IMR-90 (cell line): ENCODE measurements at regions of chr6 and their contacts with region 1.

Region 1: DNA sequence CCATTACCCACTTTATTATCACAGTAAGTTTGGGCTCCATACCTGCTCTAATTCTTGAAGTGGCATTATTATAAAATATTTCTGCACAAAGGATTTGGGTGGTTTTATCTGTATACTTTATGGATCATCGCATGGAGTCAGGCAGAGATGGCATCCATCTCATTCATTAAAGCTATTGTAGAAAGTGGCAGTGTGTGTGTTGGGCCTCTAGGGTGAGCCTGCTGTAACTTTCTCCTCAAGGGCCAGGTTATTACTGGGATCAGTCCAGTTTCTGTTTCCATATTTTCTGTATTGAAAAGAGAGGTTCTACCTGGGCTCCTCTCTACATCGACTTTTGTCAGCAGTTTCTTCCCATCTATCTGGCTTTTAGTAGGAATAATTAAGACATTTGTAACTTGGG is 511.1 kb downstream of the MMUT start:
- DNase-seq: no peak
- ATAC-seq: no peak
- H3K4me3 ChIP-seq: no peak overlapping the region
- H3K27ac ChIP-seq: no peak overlapping the region
- H3K4me1 ChIP-seq: no peaks in the 10 kb centered on the region
- H3K27me3 ChIP-seq: no peaks in the 10 kb centered on the region
- CTCF ChIP-seq: no peak
- POLR2A ChIP-seq: no peak
- RAD21 ChIP-seq: no peak

Region 2: DNA sequence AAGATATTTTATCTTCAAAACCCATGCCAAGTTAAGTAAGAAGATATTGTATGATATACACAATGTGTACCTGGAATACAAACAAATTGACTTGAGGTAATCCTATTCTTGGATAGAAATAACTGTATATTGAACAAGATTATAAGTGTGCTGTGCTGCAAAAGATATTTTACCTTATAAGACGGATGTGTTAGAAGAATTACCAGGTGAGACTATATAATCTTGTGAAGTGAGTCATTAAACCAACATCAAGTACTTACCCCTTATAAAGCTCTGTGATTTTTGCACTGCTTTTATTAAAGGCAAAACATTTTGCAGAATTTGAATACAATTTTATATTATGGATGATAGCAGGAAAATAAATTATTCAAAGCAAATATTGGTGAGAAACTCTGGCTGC is 58.9 kb before region 1 on chr6:
- CTCF ChIA-PET with region 1: no interaction called
- POLR2A ChIA-PET with region 1: no interaction called
- dilution Hi-C with region 1: no loop called
- in situ Hi-C with region 1: no loop called
- intact Hi-C with region 1: loop called (anchors 5 kb)
- DNase-seq: no peak
- ATAC-seq: no peak
- H3K4me3 ChIP-seq: no peak overlapping the region
- H3K27ac ChIP-seq: no peak overlapping the region
- H3K4me1 ChIP-seq: no peaks in the 10 kb centered on the region
- H3K27me3 ChIP-seq: no peaks in the 10 kb centered on the region
- CTCF ChIP-seq: no peak
- POLR2A ChIP-seq: no peak
- RAD21 ChIP-seq: no peak

Region 3: GRCh38 chr6:48985025-48985424 is 33.1 kb after region 1 on chr6:
- CTCF ChIA-PET with region 1: no interaction called
- POLR2A ChIA-PET with region 1: no interaction called
- dilution Hi-C with region 1: no loop called
- in situ Hi-C with region 1: no loop called
- intact Hi-C with region 1: no loop called
- DNase-seq: peak; percentile 82
- ATAC-seq: peak; percentile 32; the same call in 1 of the 2 replicates
- H3K4me3 ChIP-seq: no peak overlapping the region
- H3K27ac ChIP-seq: no peak overlapping the region
- H3K4me1 ChIP-seq: no peaks in the 10 kb centered on the region
- H3K27me3 ChIP-seq: no peaks in the 10 kb centered on the region
- CTCF ChIP-seq: no peak
- POLR2A ChIP-seq: no peak
- RAD21 ChIP-seq: no peak